Panc1 (cell line): ENCODE measurements at regions of chr16 and their contacts with region 1.

Region 1: DNA sequence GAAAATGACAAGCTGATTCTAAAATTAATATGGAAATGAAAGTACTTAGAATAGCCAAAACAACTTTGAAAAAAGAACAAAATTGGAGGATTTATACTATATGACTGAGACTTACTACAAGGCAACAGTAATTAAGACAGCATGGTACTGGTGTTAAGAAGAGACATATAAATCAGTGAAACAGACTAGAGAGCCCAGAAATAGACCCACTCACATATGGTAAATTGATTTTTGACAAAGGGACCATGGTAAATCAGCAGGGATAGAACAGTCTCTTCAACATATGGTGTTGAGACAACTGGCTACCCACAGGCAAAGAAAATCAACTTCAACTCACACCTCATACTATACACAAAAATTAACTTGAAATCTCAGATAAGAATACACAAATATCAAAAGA is 12.9 kb downstream of the CMC2 start:
- DNase-seq: no peak
- ATAC-seq: no peak
- H3K4me3 ChIP-seq: no peak overlapping the region
- H3K27ac ChIP-seq: no peak overlapping the region
- H3K4me1 ChIP-seq: peaks cover 10% of the 10 kb centered on the region
- H3K27me3 ChIP-seq: no peaks in the 10 kb centered on the region
- CTCF ChIP-seq: no peak

Region 2: GRCh38 chr16:81444448-81445121 is 450.8 kb after region 1 on chr16 and contains the start of gene CMIP:
- CTCF ChIA-PET with region 1: no interaction called
- POLR2A ChIA-PET with region 1: interaction called, 12 read pairs
- in situ Hi-C with region 1: no loop called
- intact Hi-C with region 1: no loop called
- DNase-seq: no peak
- ATAC-seq: peak; percentile 86
- H3K4me3 ChIP-seq: peak within 1 kb of the TSS; percentile 74 to 87
- H3K27ac ChIP-seq: peak within 1 kb of the TSS; percentile 87
- H3K4me1 ChIP-seq: peaks cover 9% of the 10 kb centered on the region
- H3K27me3 ChIP-seq: no peaks in the 10 kb centered on the region
- CTCF ChIP-seq: no peak
- total RNA-seq, gene CMIP: 49.7 TPM